ENCODE measurements at regions of chr4 and their contacts with region 1.

Region 1: GRCh38 chr4:47213971-47214370 is 182.6 kb downstream of the GABRB1 start:
- DNase-seq: peak; percentile 96
- ATAC-seq: peak; percentile 65
- H3K4me3 ChIP-seq: no peak overlapping the region
- H3K27ac ChIP-seq: no peak overlapping the region
- H3K4me1 ChIP-seq: peaks cover 3% of the 10 kb centered on the region; the same call in 1 of the 2 replicates
- H3K27me3 ChIP-seq: no peaks in the 10 kb centered on the region
- CTCF ChIP-seq: no peak
- POLR2A ChIP-seq: no peak
- RAD21 ChIP-seq: no peak

Region 2: GRCh38 chr4:47187608-47188007 is 26.4 kb before region 1 on chr4:
- CTCF ChIA-PET with region 1: no interaction called
- POLR2A ChIA-PET with region 1: no interaction called
- dilution Hi-C with region 1: no loop called
- in situ Hi-C with region 1: no loop called
- intact Hi-C with region 1: loop called (anchors 2 kb)
- DNase-seq: no peak
- ATAC-seq: no peak
- H3K4me3 ChIP-seq: no peak overlapping the region
- H3K27ac ChIP-seq: no peak overlapping the region
- H3K4me1 ChIP-seq: no peaks in the 10 kb centered on the region
- H3K27me3 ChIP-seq: no peaks in the 10 kb centered on the region
- CTCF ChIP-seq: no peak
- POLR2A ChIP-seq: no peak
- RAD21 ChIP-seq: no peak

Region 3: GRCh38 chr4:47531241-47531953 is 317.4 kb after region 1 on chr4:
- CTCF ChIA-PET with region 1: no interaction called
- POLR2A ChIA-PET with region 1: no interaction called
- dilution Hi-C with region 1: no loop called
- in situ Hi-C with region 1: no loop called
- intact Hi-C with region 1: no loop called
- DNase-seq: peak; percentile 90
- ATAC-seq: peak; percentile 88
- H3K4me3 ChIP-seq: no peak overlapping the region
- H3K27ac ChIP-seq: peak overlapping the region; percentile 39
- H3K4me1 ChIP-seq: peaks cover 13% of the 10 kb centered on the region
- H3K27me3 ChIP-seq: no peaks in the 10 kb centered on the region
- CTCF ChIP-seq: no peak
- POLR2A ChIP-seq: no peak
- RAD21 ChIP-seq: no peak

Region 4: DNA sequence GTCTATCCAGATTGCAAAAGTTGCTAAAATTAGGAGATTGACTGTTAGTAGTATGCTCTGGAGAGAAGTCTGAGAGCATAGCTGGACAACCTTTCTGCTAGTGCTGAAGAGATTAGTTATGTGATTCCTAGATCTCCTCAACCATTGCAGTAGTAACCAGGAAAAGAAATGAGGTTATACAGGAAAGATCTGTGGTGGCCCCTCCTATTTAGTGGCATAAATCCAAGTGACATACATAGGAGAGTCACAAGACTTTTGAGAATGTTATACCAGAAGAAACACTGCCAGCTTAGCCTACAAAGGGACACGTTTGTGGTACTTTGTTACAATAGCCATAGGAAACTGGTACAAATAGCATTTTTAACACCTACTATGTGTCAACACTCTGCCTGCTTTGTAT is 376.4 kb after region 1 on chr4:
- CTCF ChIA-PET with region 1: no interaction called
- POLR2A ChIA-PET with region 1: no interaction called
- dilution Hi-C with region 1: no loop called
- in situ Hi-C with region 1: no loop called
- intact Hi-C with region 1: no loop called
- DNase-seq: no peak
- ATAC-seq: no peak
- H3K4me3 ChIP-seq: no peak overlapping the region
- H3K27ac ChIP-seq: no peak overlapping the region
- H3K4me1 ChIP-seq: no peaks in the 10 kb centered on the region
- H3K27me3 ChIP-seq: no peaks in the 10 kb centered on the region
- CTCF ChIP-seq: no peak
- POLR2A ChIP-seq: no peak
- RAD21 ChIP-seq: no peak

Measured in IMR-90 (cell line).